CD8-positive, alpha-beta memory T cell (primary cell): ENCODE measurements at regions of chr7 and their contacts with region 1.

Region 1: DNA sequence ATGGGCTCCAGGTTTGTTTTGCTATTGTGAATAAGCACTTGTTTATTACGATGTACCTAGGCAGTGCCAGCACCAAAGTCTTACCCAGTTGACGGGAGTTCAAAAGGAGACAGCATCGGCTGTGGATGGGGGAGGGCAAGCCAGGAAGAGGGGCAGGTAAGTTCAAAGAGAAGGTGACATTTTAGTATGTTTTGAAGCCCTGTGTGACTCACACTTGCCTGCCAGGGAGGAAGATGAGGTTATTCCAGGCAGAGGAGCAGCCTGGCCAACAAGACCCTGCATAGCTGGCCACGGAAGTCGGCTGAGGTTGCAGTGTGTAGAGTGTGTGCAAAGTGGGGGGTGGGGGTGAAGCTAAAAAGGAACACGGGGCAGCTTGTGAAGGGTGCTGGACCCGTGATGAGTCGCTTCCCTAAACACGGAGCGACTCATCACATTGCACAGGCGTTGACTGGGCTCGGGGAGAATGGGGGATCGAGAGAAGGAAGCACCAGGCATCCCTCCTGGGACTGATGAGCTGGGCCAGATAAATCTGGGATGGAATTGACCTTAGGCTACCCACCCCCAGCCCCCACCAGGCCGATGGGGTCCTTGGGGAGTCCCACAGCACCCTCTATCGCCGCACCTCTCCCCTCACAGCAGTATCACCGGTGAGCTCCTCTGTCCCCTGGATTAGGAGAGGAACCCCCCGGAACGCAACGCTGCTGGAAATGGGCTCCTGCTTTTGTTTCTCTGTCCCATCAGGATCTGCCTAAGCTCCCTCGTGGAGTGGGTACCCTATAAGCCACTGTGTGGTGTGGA is 97.9 kb upstream of the IKZF1 start:
- DNase-seq: peak; percentile 36 to 86 (median 61)
- H3K4me3 ChIP-seq: peak overlapping the region; percentile 18
- H3K4me3 Mint-ChIP-seq: peak overlapping the region; percentile 2 to 82 (median 76)
- H3K27ac ChIP-seq: no peak overlapping the region
- H3K27ac Mint-ChIP-seq: peak overlapping the region; percentile 45 to 95 (median 83)
- H3K4me1 ChIP-seq: peaks cover 66% of the 10 kb centered on the region
- H3K4me1 Mint-ChIP-seq: peaks cover 62 to 74% (median 74%) of the 10 kb centered on the region in 3 donors
- H3K27me3 ChIP-seq: no peaks in the 10 kb centered on the region
- H3K27me3 Mint-ChIP-seq: peaks cover 0 to 2% of the 10 kb centered on the region in 2 donors

Region 2: GRCh38 chr7:50229964-50230363 is 23.3 kb after region 1 on chr7:
- CTCF ChIA-PET with region 1: interaction called, 27 read pairs
- POLR2A ChIA-PET with region 1: interaction called, 3 read pairs
- DNase-seq: no peak
- H3K4me3 ChIP-seq: no peak overlapping the region
- H3K4me3 Mint-ChIP-seq: no peak overlapping the region
- H3K27ac ChIP-seq: no peak overlapping the region
- H3K27ac Mint-ChIP-seq: no peak overlapping the region
- H3K4me1 ChIP-seq: peaks cover 28% of the 10 kb centered on the region
- H3K4me1 Mint-ChIP-seq: peaks cover 33 to 38% (median 38%) of the 10 kb centered on the region in 3 donors
- H3K27me3 ChIP-seq: no peaks in the 10 kb centered on the region
- H3K27me3 Mint-ChIP-seq: no peaks in the 10 kb centered on the region

Region 3: GRCh38 chr7:50304158-50304910 is 97.7 kb after region 1 on chr7 and contains the start of gene IKZF1:
- CTCF ChIA-PET with region 1: interaction called, 39 read pairs
- POLR2A ChIA-PET with region 1: interaction called, 29 read pairs
- DNase-seq: peak; percentile 45 to 71 (median 53)
- H3K4me3 ChIP-seq: peak within 1 kb of the TSS; percentile 92
- H3K4me3 Mint-ChIP-seq: peak within 1 kb of the TSS; percentile 95 to 100 (median 99)
- H3K27ac ChIP-seq: peak within 1 kb of the TSS; percentile 86
- H3K27ac Mint-ChIP-seq: peak within 1 kb of the TSS; percentile 92 to 99 (median 98)
- H3K4me1 ChIP-seq: peaks cover 50% of the 10 kb centered on the region
- H3K4me1 Mint-ChIP-seq: peaks cover 44 to 60% (median 59%) of the 10 kb centered on the region in 3 donors
- H3K27me3 ChIP-seq: no peaks in the 10 kb centered on the region
- H3K27me3 Mint-ChIP-seq: peaks cover 0 to 2% of the 10 kb centered on the region in 2 donors
- total RNA-seq, gene IKZF1: 225 to 226 TPM

Region 4: GRCh38 chr7:50335795-50336754 is 129.4 kb after region 1 on chr7:
- CTCF ChIA-PET with region 1: interaction called, 16 read pairs
- POLR2A ChIA-PET with region 1: interaction called, 13 read pairs
- DNase-seq: peak; percentile 71 to 93 (median 77)
- H3K4me3 ChIP-seq: peak overlapping the region; percentile 32
- H3K4me3 Mint-ChIP-seq: no peak overlapping the region
- H3K27ac ChIP-seq: peak overlapping the region; percentile 49
- H3K27ac Mint-ChIP-seq: no peak overlapping the region
- H3K4me1 ChIP-seq: peaks cover 100% of the 10 kb centered on the region
- H3K4me1 Mint-ChIP-seq: peaks cover 0 to under 1% (median 0%) of the 10 kb centered on the region in 3 donors
- H3K27me3 ChIP-seq: no peaks in the 10 kb centered on the region
- H3K27me3 Mint-ChIP-seq: no peaks in the 10 kb centered on the region

Region 5: GRCh38 chr7:50369143-50370026 is 162.7 kb after region 1 on chr7:
- CTCF ChIA-PET with region 1: interaction called, 83 read pairs
- POLR2A ChIA-PET with region 1: interaction called, 6 read pairs
- DNase-seq: peak in 4 of 5 donors; percentile 44 to 82 (median 72)
- H3K4me3 ChIP-seq: peak overlapping the region; percentile 27
- H3K4me3 Mint-ChIP-seq: peak overlapping the region; percentile 7 to 72 (median 62)
- H3K27ac ChIP-seq: no peak overlapping the region
- H3K27ac Mint-ChIP-seq: peak overlapping the region in 7 of 8 donors; percentile 87 to 100 (median 93)
- H3K4me1 ChIP-seq: peaks cover 97% of the 10 kb centered on the region
- H3K4me1 Mint-ChIP-seq: peaks cover 94 to 100% (median 98%) of the 10 kb centered on the region in 3 donors
- H3K27me3 ChIP-seq: no peaks in the 10 kb centered on the region
- H3K27me3 Mint-ChIP-seq: no peaks in the 10 kb centered on the region

Region 6: DNA sequence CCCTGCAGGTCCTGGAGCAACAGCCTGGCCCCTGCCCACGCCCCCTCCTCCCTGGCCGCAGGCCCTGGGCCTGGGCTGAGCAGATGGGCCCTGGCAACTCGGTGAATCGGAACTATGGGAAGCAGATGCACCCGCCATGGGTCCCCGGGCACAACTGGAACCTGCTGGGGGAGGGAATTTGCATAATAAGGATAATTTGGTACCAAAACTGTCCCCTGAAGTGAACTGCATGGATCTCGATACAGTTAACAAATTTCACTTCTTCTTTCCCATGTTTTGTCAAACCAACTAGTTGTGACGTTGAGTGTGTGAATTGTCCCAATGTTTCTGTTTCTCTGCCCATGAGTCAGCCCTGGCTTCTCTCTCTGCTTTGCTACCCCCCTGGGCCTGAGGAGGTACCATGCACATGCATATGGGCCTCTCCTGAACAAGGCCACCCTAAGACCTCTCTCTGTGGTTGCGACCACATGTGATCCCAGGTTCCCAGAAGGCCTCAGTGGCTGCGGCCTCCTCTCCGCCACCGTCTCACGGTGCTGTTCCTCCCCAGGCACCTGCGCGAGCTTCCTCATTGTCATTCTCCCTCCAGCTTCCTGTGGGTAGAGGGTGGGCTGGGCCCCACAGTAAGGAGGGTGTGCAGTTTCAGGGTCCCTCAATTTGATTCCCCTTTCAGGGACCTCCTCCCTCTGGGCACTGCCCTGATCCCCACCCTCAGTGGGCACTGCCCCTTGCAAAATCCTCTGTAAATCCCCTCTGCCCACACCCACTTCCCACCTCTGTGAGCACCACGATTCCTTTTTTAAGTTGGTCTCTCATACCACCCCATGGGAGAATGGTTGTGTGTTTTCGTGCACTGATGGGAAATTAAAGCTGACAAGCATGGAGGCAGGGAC is 203.4 kb after region 1 on chr7:
- CTCF ChIA-PET with region 1: interaction called, 62 read pairs
- POLR2A ChIA-PET with region 1: interaction called, 7 read pairs
- DNase-seq: no peak
- H3K4me3 ChIP-seq: no peak overlapping the region
- H3K4me3 Mint-ChIP-seq: peak overlapping the region in 3 of 7 donors; percentile 41 to 53 (median 52)
- H3K27ac ChIP-seq: no peak overlapping the region
- H3K27ac Mint-ChIP-seq: peak overlapping the region in 5 of 8 donors; percentile 41 to 91 (median 60)
- H3K4me1 ChIP-seq: peaks cover 3% of the 10 kb centered on the region
- H3K4me1 Mint-ChIP-seq: peaks cover 53 to 70% (median 64%) of the 10 kb centered on the region in 3 donors
- H3K27me3 ChIP-seq: no peaks in the 10 kb centered on the region
- H3K27me3 Mint-ChIP-seq: no peaks in the 10 kb centered on the region